Mucosa of descending colon (tissue), 3 donors: ENCODE measurements at regions of chr20 and their contacts with region 1.

Region 1: GRCh38 chr20:45311589-45312211 is 3.6 kb upstream of the MATN4 start:
- DNase-seq: peak; percentile 65 to 78 (median 71)
- ATAC-seq: peak; percentile 79
- H3K4me3 ChIP-seq: no peak overlapping the region
- H3K4me1 ChIP-seq: no peaks in the 10 kb centered on the region
- CTCF ChIP-seq: peak; percentile 79

Region 2: DNA sequence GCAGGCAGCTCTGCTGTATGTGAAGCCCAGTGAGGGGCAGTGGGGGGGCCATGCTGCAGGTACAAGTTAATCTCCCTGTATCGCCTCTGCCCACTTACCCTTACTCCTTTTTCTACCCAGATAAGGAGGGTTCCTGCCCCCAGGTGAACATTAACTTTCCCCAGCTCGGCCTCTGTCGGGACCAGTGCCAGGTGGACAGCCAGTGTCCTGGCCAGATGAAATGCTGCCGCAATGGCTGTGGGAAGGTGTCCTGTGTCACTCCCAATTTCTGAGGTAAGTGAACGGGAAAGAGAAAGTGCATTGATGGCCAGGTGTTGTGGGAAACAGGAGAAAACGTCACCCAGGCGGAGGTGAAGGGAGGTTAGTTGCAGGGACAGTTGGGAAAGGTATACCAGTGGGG is 168.1 kb after region 1 on chr20:
- intact Hi-C with region 1: no loop called
- DNase-seq: no peak
- ATAC-seq: no peak
- H3K4me3 ChIP-seq: no peak overlapping the region
- H3K4me1 ChIP-seq: peaks cover 1% of the 10 kb centered on the region
- CTCF ChIP-seq: no peak

Region 3: DNA sequence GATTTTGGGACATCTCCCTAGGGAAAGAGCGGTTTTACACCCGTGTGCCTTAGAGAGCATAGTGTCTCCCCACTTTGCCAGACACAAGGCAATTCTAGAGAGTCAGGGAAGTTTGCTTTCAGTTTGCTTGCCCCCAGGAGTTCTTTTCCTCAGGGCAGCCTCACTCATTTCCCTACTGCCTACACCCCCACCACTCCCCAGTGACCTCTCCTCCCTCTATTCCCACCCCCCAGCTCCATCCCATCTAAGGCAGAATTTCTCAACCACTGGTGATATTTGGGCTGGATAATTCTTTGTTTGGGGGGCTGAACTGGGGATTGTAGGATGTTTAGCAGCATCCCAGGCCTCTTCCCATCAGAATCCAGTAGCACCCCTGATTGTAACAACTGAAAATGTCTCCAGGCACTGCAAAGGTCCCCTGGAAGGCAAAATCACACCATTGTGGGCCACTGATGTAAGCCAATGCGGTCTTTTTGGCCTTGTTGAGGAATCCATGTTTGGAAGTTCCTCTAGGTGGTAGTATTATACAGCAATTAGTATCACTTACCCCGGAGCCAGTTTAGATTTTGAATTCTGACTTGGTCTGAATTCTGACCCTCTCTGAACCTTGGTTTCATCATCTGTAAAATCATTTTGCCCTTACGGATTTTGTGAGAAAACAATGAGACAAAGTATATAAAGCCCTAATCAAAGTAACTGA is 234.2 kb after region 1 on chr20:
- intact Hi-C with region 1: no loop called
- DNase-seq: no peak
- ATAC-seq: peak; percentile 68
- H3K4me3 ChIP-seq: no peak overlapping the region
- H3K4me1 ChIP-seq: no peaks in the 10 kb centered on the region
- CTCF ChIP-seq: no peak

Region 4: DNA sequence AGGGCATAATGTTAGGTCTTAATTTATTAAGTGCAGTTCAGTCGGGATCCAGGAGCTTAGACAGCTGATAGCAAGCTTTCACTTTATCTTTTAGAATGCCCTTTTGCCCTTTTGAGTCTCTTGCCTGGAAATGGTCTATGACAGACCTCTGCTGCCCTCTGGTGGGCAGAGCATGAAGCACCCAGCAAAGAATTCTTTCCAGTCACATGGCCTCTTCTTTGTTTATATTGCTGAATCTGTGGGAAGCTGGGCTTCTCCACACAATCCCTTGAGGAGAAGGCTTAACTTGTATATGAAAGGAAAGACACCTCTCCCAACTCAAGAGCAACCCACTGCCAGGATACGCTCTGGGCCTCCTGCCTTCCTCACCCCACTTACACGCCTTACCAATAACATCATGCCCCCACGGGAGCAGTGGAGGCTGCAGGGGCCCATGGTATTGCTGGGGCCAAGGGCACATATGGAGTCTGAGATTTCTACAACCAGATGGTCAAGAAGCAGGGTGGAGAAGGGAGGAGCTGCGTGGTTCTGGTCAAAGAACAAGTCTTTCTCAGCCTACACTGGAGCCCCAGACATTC is 459.6 kb after region 1 on chr20:
- intact Hi-C with region 1: loop called in 1 of 2 experiments (anchors 10 kb)
- DNase-seq: peak; percentile 77 to 91 (median 91)
- ATAC-seq: peak; percentile 87
- H3K4me3 ChIP-seq: no peak overlapping the region
- H3K4me1 ChIP-seq: peaks cover 12% of the 10 kb centered on the region
- CTCF ChIP-seq: peak; percentile 87